PC-3 (cell line): ENCODE measurements at regions of chr1 and their contacts with region 1.

Region 1: GRCh38 chr1:214753236-214753852 is 150.3 kb downstream of the CENPF start:
- DNase-seq: no peak
- ATAC-seq: no peak; the same call in 1 of the 2 replicates
- H3K4me3 ChIP-seq: no peak overlapping the region
- H3K27ac ChIP-seq: no peak overlapping the region
- H3K4me1 ChIP-seq: peaks cover 5% of the 10 kb centered on the region; the same call in 1 of the 2 replicates
- H3K27me3 ChIP-seq: no peaks in the 10 kb centered on the region
- CTCF ChIP-seq: no peak

Region 2: GRCh38 chr1:214791961-214792360 is 38.6 kb after region 1 on chr1:
- CTCF ChIA-PET with region 1: no interaction called
- POLR2A ChIA-PET with region 1: interaction called, 12 read pairs
- intact Hi-C with region 1: no loop called
- DNase-seq: no peak
- ATAC-seq: no peak; the same call in 1 of the 2 replicates
- H3K4me3 ChIP-seq: no peak overlapping the region
- H3K27ac ChIP-seq: no peak overlapping the region
- H3K4me1 ChIP-seq: no peaks in the 10 kb centered on the region
- H3K27me3 ChIP-seq: no peaks in the 10 kb centered on the region
- CTCF ChIP-seq: no peak

Region 3: GRCh38 chr1:214901718-214902117 is 148.4 kb after region 1 on chr1:
- CTCF ChIA-PET with region 1: no interaction called
- POLR2A ChIA-PET with region 1: no interaction called
- intact Hi-C with region 1: no loop called
- DNase-seq: peak; percentile 99
- ATAC-seq: peak; percentile 85
- H3K4me3 ChIP-seq: peak overlapping the region; percentile 48
- H3K27ac ChIP-seq: peak overlapping the region; percentile 88
- H3K4me1 ChIP-seq: peaks cover 44% of the 10 kb centered on the region
- H3K27me3 ChIP-seq: no peaks in the 10 kb centered on the region
- CTCF ChIP-seq: no peak; the same call in 1 of the 2 replicates

Region 4: DNA sequence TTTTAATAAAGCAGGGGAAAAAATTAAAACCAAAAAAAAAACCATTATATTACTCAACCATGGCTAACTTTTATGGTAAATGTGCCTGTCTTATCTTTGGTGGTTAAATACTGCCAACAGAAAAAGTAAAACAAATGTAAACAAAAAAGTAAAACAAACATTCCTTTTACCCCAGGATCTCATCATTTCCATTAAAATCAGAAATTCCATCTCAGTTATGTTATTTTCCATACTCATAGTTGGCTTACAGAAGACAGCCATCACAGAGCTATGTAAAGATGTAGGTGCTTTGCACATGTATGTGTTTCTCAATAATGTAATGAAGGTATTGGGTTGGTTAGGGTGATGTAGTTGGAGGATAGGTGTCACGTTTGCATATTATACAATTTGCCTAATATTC is 514.1 kb after region 1 on chr1:
- CTCF ChIA-PET with region 1: no interaction called
- POLR2A ChIA-PET with region 1: interaction called, 11 read pairs
- intact Hi-C with region 1: no loop called
- DNase-seq: peak; percentile 59
- ATAC-seq: peak; percentile 76
- H3K4me3 ChIP-seq: no peak overlapping the region
- H3K27ac ChIP-seq: no peak overlapping the region
- H3K4me1 ChIP-seq: no peaks in the 10 kb centered on the region; the same call in 1 of the 2 replicates
- H3K27me3 ChIP-seq: no peaks in the 10 kb centered on the region
- CTCF ChIP-seq: no peak